Psoas muscle (tissue), 8 donors: ENCODE measurements at regions of chr6 and their contacts with region 1.

Region 1: DNA sequence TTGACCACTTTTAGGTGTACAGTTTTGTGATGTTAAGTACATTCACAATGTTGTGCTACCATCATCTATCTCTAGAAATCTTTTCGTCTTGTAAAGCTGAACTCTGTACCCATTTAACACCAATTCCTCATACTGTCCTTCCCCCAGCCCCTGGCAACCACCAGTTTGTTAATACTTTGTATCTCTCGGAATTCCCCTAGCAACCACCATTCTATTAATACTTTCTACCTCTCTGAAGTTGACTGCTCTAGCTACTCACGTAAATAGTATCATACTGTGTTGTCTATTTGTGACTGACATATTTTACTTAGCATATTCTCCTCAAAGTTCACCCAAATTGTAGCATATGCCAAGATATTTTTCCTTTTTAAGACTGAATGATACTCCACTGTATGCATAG is 82.3 kb upstream of the CLDN20 start:
- DNase-seq: no peak
- ATAC-seq: no peak
- H3K4me3 ChIP-seq: no peak overlapping the region
- H3K27ac ChIP-seq: no peak overlapping the region
- H3K4me1 ChIP-seq: no peaks in the 10 kb centered on the region
- H3K27me3 ChIP-seq: no peaks in the 10 kb centered on the region
- CTCF ChIP-seq: no peak

Region 2: GRCh38 chr6:155130161-155130853 is 51.2 kb before region 1 on chr6:
- intact Hi-C with region 1: no loop called
- DNase-seq: no peak
- ATAC-seq: no peak
- H3K4me3 ChIP-seq: no peak overlapping the region
- H3K27ac ChIP-seq: no peak overlapping the region
- H3K4me1 ChIP-seq: peaks cover 3% of the 10 kb centered on the region
- H3K27me3 ChIP-seq: no peaks in the 10 kb centered on the region
- CTCF ChIP-seq: no peak

Region 3: DNA sequence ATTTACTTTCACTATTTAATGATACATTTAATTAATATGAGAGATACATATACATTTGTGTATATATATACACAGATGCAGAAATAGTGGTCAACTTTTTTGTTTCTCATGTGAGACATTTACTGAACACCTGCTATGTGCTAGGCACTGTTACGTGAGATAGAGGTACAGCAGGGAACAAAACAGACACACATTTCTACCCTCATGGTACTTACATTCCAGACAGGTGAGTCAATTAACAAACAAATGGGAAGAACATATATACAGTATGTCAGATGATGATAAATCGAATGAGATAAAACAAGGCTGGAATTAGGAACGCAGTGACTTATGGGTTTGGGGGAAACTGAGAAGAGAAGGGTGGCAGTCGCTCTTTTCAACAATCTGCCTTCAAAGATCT is 127.7 kb after region 1 on chr6:
- intact Hi-C with region 1: loop called in 1 of 2 experiments (anchors 5 kb)
- DNase-seq: no peak
- ATAC-seq: no peak
- H3K4me3 ChIP-seq: no peak overlapping the region
- H3K27ac ChIP-seq: no peak overlapping the region
- H3K4me1 ChIP-seq: peaks cover 12% of the 10 kb centered on the region
- H3K27me3 ChIP-seq: no peaks in the 10 kb centered on the region
- CTCF ChIP-seq: no peak